PC-3 (cell line): ENCODE measurements at regions of chr18 and their contacts with region 1.

Region 1: DNA sequence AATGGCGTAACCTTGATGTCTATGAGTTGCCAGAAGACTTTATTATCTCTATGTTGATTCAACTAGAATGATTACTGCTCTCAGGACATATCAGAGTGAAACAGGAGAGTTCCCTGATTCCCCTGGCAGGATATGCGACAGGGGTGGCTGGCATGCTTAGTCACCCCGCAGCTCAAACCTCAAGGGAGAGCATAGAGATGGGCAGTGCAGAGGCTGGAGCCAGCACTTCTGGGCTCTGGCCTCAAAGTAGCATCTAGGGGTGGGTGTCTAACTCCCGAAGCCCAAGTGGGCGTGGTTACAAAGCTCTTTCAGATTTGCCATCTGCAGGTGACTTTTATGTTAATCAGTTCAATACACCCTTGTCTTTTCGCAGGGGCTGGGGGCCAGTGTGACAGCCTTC is 391.6 kb downstream of the ADCYAP1 start:
- DNase-seq: peak; percentile 25
- ATAC-seq: no peak; the same call in 1 of the 2 replicates
- H3K4me3 ChIP-seq: no peak overlapping the region
- H3K27ac ChIP-seq: no peak overlapping the region
- H3K4me1 ChIP-seq: peaks cover 6% of the 10 kb centered on the region
- H3K27me3 ChIP-seq: no peaks in the 10 kb centered on the region
- CTCF ChIP-seq: no peak

Region 2: GRCh38 chr18:1350931-1351450 is 54.8 kb after region 1 on chr18:
- CTCF ChIA-PET with region 1: no interaction called
- POLR2A ChIA-PET with region 1: no interaction called
- intact Hi-C with region 1: loop called (anchors 2 kb)
- DNase-seq: peak; percentile 68
- ATAC-seq: peak; percentile 88
- H3K4me3 ChIP-seq: no peak overlapping the region
- H3K27ac ChIP-seq: peak overlapping the region; percentile 21; the same call in 1 of the 2 replicates
- H3K4me1 ChIP-seq: peaks cover 13% of the 10 kb centered on the region
- H3K27me3 ChIP-seq: no peaks in the 10 kb centered on the region
- CTCF ChIP-seq: no peak